ENCODE measurements at regions of chr12 and their contacts with region 1.

Region 1: DNA sequence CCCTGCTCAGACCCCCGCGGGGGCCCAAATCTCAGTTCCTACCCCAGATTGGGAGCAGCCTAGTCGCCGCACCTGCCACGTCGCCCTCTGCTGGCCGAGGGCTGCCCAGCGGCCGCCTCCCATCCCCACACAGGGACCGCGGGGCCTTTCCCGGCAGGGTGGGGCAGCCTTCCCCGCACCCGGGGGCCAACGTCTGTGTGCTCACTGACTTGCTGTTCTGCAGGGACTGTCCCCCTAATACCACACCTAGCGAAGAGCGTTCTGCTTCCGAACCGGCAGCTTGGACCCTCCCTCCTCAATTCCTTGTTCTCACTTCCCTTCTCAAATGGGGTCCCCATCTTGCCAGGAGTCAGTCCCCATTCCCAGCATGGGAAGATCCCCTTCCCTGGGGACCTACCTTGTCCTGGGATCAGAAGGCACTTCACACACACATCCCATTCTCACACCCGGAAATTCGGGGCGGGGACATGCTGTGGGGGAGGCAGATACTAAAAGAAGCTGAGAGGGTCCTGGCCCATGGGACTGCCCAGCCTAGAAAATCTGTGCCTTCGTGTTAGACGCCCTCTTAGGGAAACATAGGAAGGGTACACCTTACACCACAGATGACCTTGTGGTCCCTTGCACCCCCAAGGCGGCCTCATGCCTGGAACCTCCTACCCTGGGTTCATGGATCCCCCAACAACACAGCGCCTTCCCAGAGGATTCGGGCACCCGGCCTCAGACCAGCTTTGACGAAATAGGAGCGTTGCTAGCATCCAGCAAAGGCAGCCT is 16.4 kb downstream of the ACVRL1 start:
- DNase-seq: peak; percentile 21 to 53
- ATAC-seq: peak; percentile 46 to 49
- H3K4me3 ChIP-seq: peak overlapping the region in 3 of 4 donors; percentile 5 to 32 (median 15)
- H3K27ac ChIP-seq: peak overlapping the region; percentile 61 to 76 (median 67)
- H3K4me1 ChIP-seq: peaks cover 31 to 49% of the 10 kb centered on the region in 2 donors
- H3K27me3 ChIP-seq: no peaks in the 10 kb centered on the region
- CTCF ChIP-seq: peak; percentile 62 to 94 (median 82)
- POLR2A ChIP-seq: no peak

Region 2: DNA sequence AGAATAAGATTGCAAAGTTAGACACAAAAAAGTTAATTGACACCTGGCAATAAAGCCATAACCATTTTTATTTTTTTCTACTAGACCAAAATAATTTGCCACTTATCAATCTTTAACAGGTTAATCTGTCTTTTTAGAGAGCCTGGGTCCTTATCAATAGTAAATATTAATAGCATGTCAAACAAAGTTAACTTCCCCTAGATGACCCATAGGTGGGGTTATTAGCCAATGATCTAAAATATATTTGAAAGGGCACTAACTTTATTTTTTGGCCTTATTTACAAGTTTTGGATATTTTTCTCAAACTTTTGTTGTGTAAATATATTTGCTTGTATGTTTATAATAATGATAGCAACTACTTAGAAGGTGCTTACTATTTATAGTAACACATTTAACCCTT is 31.8 kb before region 1 on chr12:
- in situ Hi-C with region 1: no loop called
- intact Hi-C with region 1: loop called (anchors 2 kb)
- DNase-seq: no peak
- ATAC-seq: no peak
- H3K4me3 ChIP-seq: no peak overlapping the region
- H3K27ac ChIP-seq: no peak overlapping the region
- H3K4me1 ChIP-seq: peaks cover 4 to 8% of the 10 kb centered on the region in 2 donors
- H3K27me3 ChIP-seq: peaks cover 0 to 6% (median 5%) of the 10 kb centered on the region in 3 donors
- CTCF ChIP-seq: peak in 3 of 5 experiments; percentile 18 to 37 (median 18)
- POLR2A ChIP-seq: no peak

Region 3: DNA sequence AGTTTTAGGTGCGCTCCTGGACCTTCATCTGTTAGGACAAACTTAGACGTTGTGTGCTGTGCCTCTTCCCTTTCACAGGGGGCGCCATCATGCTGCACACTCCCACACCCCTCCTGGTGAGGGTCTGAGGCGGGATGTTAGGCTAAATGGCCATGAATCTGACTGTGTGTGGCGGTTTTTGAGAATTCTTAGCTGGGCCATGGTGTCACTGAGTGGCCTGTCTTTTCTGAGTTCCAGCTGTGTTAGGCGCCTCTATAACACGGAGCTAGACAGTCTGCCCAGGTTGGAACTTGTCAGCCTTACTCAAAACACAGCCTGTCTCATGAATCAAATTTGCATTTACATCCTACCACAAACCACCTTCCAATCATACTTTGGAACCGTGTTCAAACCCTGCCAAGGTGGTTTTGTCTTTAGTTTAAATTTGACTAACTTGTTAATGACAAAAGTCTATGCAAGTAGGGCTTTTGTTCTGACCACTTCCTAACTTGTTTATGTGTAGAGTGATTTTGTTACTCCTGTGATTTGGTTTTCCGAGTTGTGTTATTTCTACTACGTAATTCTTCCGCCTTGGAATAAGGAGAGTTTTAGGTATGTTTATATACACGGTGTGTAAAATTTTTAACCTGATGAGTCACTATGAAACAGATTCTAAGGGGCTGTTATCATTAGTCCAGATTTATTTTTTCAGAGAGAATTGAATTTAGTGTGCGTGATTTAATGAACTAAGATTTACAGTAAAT is 47.4 kb after region 1 on chr12:
- in situ Hi-C with region 1: loop called in 1 of 4 experiments (anchors 10 kb)
- intact Hi-C with region 1: no loop called
- DNase-seq: no peak
- ATAC-seq: no peak
- H3K4me3 ChIP-seq: no peak overlapping the region
- H3K27ac ChIP-seq: no peak overlapping the region
- H3K4me1 ChIP-seq: peaks cover 38 to 43% of the 10 kb centered on the region in 2 donors
- H3K27me3 ChIP-seq: no peaks in the 10 kb centered on the region
- CTCF ChIP-seq: no peak
- POLR2A ChIP-seq: no peak

Region 4: GRCh38 chr12:51980051-51980808 is 56.5 kb after region 1 on chr12:
- in situ Hi-C with region 1: loop called in 1 of 4 experiments (anchors 10 kb)
- intact Hi-C with region 1: loop called (anchors 2 kb)
- DNase-seq: peak; percentile 49 to 52
- ATAC-seq: peak; percentile 89 to 93
- H3K4me3 ChIP-seq: no peak overlapping the region
- H3K27ac ChIP-seq: no peak overlapping the region
- H3K4me1 ChIP-seq: no peaks in the 10 kb centered on the region
- H3K27me3 ChIP-seq: no peaks in the 10 kb centered on the region
- CTCF ChIP-seq: peak; percentile 90 to 99 (median 92)
- POLR2A ChIP-seq: no peak

Measured in gastrocnemius medialis (tissue), 4 donors.